ENCODE measurements at regions of chr7 and their contacts with region 1.

Region 1: GRCh38 chr7:151315038-151315655 is 26.5 kb upstream of the NUB1 start:
- DNase-seq: peak; percentile 69 to 91 (median 80)
- H3K4me3 ChIP-seq: no peak overlapping the region
- H3K27ac ChIP-seq: no peak overlapping the region
- H3K4me1 ChIP-seq: peaks cover 0 to 14% of the 10 kb centered on the region in 2 donors
- H3K27me3 ChIP-seq: no peaks in the 10 kb centered on the region
- CTCF ChIP-seq: peak; percentile 83 to 90 (median 86)
- POLR2A ChIP-seq: no peak

Region 2: DNA sequence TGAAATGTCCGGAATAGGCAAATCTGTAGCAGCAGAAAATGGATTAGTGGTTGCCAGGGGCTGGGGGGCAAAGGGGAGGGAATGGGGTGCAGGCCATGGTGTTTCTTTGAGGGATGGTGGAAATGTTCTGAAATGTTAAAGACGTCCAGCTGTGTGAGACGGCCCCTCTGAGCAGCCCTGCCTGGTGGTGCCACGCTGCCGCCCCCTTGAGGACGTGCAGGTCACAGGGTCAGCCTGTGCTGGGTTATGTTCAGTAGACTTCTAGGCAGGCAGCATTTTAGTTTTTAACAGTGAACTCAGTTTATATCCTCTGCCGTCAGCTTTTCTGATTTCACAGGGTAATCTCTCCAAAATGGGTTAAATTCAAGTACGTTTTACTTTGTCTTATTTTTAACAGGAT is 35.9 kb after region 1 on chr7:
- intact Hi-C with region 1: loop called (anchors 2 to 5 kb)
- DNase-seq: no peak
- H3K4me3 ChIP-seq: no peak overlapping the region
- H3K27ac ChIP-seq: peak overlapping the region in 3 of 5 donors; percentile 4 to 22 (median 4)
- H3K4me1 ChIP-seq: peaks cover 2 to 25% of the 10 kb centered on the region in 2 donors
- H3K27me3 ChIP-seq: no peaks in the 10 kb centered on the region
- CTCF ChIP-seq: no peak
- POLR2A ChIP-seq: no peak

Region 3: GRCh38 chr7:151484971-151485707 is 170.0 kb after region 1 on chr7:
- intact Hi-C with region 1: no loop called
- DNase-seq: peak in 4 of 7 donors; percentile 44 to 61 (median 54)
- H3K4me3 ChIP-seq: no peak overlapping the region
- H3K27ac ChIP-seq: peak overlapping the region in 2 of 5 donors; percentile 48 to 49
- H3K4me1 ChIP-seq: peaks cover 16 to 34% of the 10 kb centered on the region in 2 donors
- H3K27me3 ChIP-seq: no peaks in the 10 kb centered on the region
- CTCF ChIP-seq: no peak
- POLR2A ChIP-seq: no peak

Measured in adrenal gland (tissue), 19 donors.